SK-N-SH (cell line): ENCODE measurements at regions of chr2 and their contacts with region 1.

Region 1: DNA sequence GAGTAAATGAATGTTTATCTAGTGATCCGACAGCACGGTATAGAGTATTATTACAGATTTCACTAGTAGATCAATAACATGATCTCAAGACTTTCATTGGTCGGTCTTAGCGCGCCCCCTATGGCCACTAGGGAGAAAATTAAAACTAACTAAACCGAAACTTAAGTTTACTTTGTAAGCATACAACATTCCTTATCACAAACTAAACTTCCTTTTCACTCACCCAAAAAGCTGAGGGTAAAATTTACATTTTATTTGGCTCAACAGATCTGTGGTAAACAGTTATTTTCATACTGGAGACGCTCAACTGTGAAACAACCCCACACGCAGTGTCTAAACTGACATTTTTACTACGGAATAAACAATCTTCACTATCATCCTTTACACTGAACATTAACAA is 215.6 kb upstream of the MAP2 start:
- DNase-seq: peak; percentile 16
- H3K4me3 ChIP-seq: peak overlapping the region in 1 of 2 experiments; percentile 60; a peak in 2 of 4 replicates
- H3K27ac ChIP-seq: no peak overlapping the region
- H3K4me1 ChIP-seq: no peaks in the 10 kb centered on the region
- H3K27me3 ChIP-seq: no peaks in the 10 kb centered on the region
- CTCF ChIP-seq: peak; percentile 68
- EP300 ChIP-seq: no peak
- RAD21 ChIP-seq: peak; percentile 78

Region 2: GRCh38 chr2:208373460-208374089 is 834.6 kb before region 1 on chr2:
- CTCF ChIA-PET with region 1: interaction called, 10 read pairs
- POLR2A ChIA-PET with region 1: no interaction called
- DNase-seq: peak; percentile 77
- H3K4me3 ChIP-seq: no peak overlapping the region; a peak in 1 of 4 replicates
- H3K27ac ChIP-seq: no peak overlapping the region
- H3K4me1 ChIP-seq: peaks cover 0 to 3% of the 10 kb centered on the region in 2 experiments; a peak in 1 of 4 replicates
- H3K27me3 ChIP-seq: no peaks in the 10 kb centered on the region
- CTCF ChIP-seq: peak; percentile 93
- EP300 ChIP-seq: no peak
- RAD21 ChIP-seq: peak; percentile 77

Region 3: GRCh38 chr2:208820014-208820688 is 388.1 kb before region 1 on chr2:
- CTCF ChIA-PET with region 1: interaction called, 22 read pairs
- POLR2A ChIA-PET with region 1: no interaction called
- DNase-seq: peak; percentile 7
- H3K4me3 ChIP-seq: no peak overlapping the region; a peak in 1 of 4 replicates
- H3K27ac ChIP-seq: no peak overlapping the region
- H3K4me1 ChIP-seq: no peaks in the 10 kb centered on the region
- H3K27me3 ChIP-seq: no peaks in the 10 kb centered on the region
- CTCF ChIP-seq: 0 out of 2 replicates have a peak, but pooled peaks have one; percentile 20
- EP300 ChIP-seq: no peak
- RAD21 ChIP-seq: peak; percentile 68

Region 4: DNA sequence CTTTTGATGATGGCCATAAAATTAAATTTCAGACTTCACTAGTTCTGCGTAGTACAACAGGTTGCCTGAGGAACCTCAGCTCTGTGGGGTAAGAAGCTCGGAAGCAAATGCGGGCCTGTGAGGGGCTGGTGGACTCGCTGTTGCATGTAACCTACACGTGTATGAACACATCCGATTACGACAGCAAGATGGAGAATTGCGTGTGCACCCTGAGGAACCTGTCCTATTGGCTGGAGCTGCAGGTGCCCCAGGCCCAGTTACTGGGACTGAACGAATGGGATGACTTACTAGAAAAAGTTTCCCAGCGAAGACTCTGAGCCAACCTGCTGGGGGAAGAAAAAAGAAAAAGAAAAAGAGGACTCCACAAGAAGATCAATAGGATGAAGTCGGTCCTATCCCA is 28.6 kb before region 1 on chr2:
- CTCF ChIA-PET with region 1: no interaction called
- POLR2A ChIA-PET with region 1: no interaction called
- DNase-seq: no peak
- H3K4me3 ChIP-seq: no peak overlapping the region
- H3K27ac ChIP-seq: no peak overlapping the region
- H3K4me1 ChIP-seq: no peaks in the 10 kb centered on the region
- H3K27me3 ChIP-seq: no peaks in the 10 kb centered on the region
- CTCF ChIP-seq: no peak
- EP300 ChIP-seq: no peak
- RAD21 ChIP-seq: no peak